Aorta (tissue), 5 donors: ENCODE measurements at regions of chr1 and their contacts with region 1.

Region 1: GRCh38 chr1:109397538-109398342 is at the start of gene SORT1:
- DNase-seq: peak; percentile 90 to 94
- ATAC-seq: peak; percentile 93
- H3K4me3 ChIP-seq: peak within 1 kb of the TSS; percentile 84 to 96
- H3K27ac ChIP-seq: peak within 1 kb of the TSS; percentile 95 to 97
- H3K4me1 ChIP-seq: peaks cover 0 to 3% of the 10 kb centered on the region in 2 donors
- H3K27me3 ChIP-seq: no peaks in the 10 kb centered on the region
- total RNA-seq, gene SORT1: 119 to 310 TPM

Region 2: GRCh38 chr1:109277434-109278204 is 120.1 kb before region 1 on chr1:
- intact Hi-C with region 1: loop called (anchors 2 kb)
- DNase-seq: peak; percentile 84 to 94
- ATAC-seq: peak; percentile 81
- H3K4me3 ChIP-seq: no peak overlapping the region
- H3K27ac ChIP-seq: no peak overlapping the region
- H3K4me1 ChIP-seq: no peaks in the 10 kb centered on the region
- H3K27me3 ChIP-seq: no peaks in the 10 kb centered on the region

Region 3: DNA sequence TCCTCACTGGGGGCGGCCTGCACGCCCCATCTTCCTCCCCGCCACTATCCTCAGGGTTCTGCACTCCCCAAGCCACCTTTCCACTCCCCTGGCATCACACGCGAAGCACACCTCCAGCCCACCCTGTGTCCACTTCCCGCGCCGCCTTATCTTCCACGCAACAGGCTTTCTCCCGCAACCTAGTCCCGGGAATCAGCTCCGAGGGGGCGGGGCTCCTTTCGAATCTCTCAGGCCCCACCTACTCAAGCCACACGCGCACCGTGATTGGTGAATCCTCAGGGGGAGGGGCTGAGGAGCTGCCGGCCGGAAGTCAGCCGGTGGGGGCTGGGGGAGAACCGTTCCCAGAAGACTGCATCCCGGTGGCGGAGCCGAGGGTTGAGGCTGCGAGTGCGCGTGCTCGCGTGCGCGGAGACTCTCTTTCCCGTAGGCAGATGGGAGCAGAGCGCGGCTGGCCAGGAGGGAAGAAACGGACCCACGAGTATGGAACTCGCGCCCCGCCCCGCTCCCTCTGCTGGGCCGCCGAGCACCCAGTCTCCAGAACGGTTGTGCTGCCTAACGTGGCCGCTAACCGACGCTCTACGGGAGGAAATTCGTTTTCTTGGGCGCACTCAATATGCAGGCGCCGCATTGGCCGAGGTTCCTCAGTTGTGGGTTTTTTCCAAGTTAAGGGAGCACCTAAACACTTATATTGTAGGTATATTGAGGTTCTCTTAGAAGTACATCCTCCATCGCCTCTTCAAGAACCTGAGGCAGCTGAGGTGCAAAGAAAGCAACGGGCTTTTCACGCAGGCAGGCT is 114.6 kb before region 1 on chr1 and contains the start of gene PSRC1:
- intact Hi-C with region 1: loop called in 1 of 2 experiments (anchors 2 kb)
- DNase-seq: peak; percentile 98
- ATAC-seq: peak; percentile 99
- H3K4me3 ChIP-seq: peak within 1 kb of the TSS; percentile 28 to 51
- H3K27ac ChIP-seq: peak within 1 kb of the TSS; percentile 86 to 92
- H3K4me1 ChIP-seq: no peaks in the 10 kb centered on the region
- H3K27me3 ChIP-seq: no peaks in the 10 kb centered on the region
- total RNA-seq, gene PSRC1: 2.2 to 4.2 TPM

Region 4: GRCh38 chr1:109298666-109299557 is 98.8 kb before region 1 on chr1:
- intact Hi-C with region 1: no loop called
- DNase-seq: peak in 1 of 2 donors; percentile 64
- ATAC-seq: no peak
- H3K4me3 ChIP-seq: no peak overlapping the region
- H3K27ac ChIP-seq: no peak overlapping the region
- H3K4me1 ChIP-seq: no peaks in the 10 kb centered on the region
- H3K27me3 ChIP-seq: no peaks in the 10 kb centered on the region

Region 5: DNA sequence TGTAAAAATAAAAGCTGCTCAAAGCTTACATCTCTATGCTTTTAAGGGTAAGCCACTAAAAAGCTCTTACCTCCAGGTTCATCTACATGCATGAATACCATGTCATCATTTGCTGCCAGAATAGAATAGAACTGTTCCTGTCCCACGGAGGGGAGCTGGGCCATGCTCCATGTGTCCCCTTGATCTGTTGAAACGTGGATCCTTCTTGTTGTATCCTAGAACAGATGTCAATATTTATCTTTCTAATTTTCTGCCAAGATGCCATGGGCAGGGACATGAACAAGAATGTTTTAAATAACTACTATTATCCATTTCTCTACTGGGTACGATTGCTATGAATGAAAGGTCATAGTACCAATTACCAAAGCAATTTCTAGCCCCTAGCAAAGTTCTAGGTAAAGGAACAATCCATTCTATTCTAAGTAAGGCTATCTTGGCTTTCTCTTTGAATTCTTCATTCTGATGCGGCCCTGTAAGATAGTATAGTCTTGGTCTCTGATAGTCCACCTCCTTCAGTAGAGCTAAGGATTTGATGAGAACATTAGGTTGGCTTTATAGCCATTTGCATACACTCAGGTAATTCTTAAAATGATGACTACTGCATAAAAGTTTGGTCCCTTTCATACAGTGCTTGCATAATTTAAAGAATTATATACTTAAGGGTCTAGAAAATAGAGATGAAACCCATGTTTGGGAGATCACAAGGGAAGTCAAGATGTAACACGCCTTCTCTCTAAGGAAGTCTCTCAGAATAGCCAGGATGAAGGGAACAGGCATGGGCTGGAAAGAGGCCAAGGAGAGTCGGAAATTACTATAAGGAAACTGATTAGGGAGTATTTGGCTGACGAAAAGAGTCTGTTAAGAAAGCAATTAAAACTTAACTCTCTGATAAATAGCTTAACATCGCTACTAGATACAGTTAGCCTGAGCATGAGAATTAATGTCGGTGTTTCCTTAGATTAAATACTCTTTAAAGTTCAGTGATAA is 55.5 kb before region 1 on chr1:
- intact Hi-C with region 1: loop called in 1 of 2 experiments (anchors 5 kb)
- DNase-seq: no peak
- ATAC-seq: no peak
- H3K4me3 ChIP-seq: no peak overlapping the region
- H3K27ac ChIP-seq: peak overlapping the region in 1 of 2 donors; percentile 57
- H3K4me1 ChIP-seq: no peaks in the 10 kb centered on the region
- H3K27me3 ChIP-seq: no peaks in the 10 kb centered on the region

Region 6: DNA sequence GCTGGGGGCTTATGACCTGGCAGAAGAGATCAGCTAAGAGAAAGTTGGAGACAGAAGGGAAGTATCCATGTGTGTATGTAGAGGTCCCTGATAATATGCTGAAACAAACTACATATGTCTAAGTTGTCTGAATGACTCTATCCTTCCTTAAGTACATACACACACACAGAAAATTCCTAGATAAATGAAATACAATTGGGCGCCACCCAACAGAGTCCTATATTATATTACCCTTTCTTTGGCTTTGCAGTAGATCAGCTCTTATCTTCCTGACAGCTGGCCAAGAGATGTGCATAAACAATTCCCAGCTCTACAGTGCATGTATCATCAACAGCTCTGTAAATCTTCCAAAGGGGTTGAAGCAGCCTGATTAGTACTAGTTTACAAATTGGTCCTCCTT is 40.1 kb before region 1 on chr1:
- intact Hi-C with region 1: loop called (anchors 5 kb)
- DNase-seq: no peak
- ATAC-seq: no peak
- H3K4me3 ChIP-seq: no peak overlapping the region
- H3K27ac ChIP-seq: peak overlapping the region; percentile 51 to 57
- H3K4me1 ChIP-seq: peaks cover 8 to 17% of the 10 kb centered on the region in 2 donors
- H3K27me3 ChIP-seq: no peaks in the 10 kb centered on the region

Region 7: GRCh38 chr1:109370712-109371455 is 26.9 kb before region 1 on chr1:
- intact Hi-C with region 1: loop called in 1 of 2 experiments (anchors 1 kb)
- DNase-seq: no peak
- ATAC-seq: peak; percentile 76
- H3K4me3 ChIP-seq: peak overlapping the region in 1 of 2 donors; percentile 83
- H3K27ac ChIP-seq: peak overlapping the region; percentile 99 to 100
- H3K4me1 ChIP-seq: peaks cover 4 to 8% of the 10 kb centered on the region in 2 donors
- H3K27me3 ChIP-seq: no peaks in the 10 kb centered on the region